PC-3 (cell line): ENCODE measurements at regions of chr12 and their contacts with region 1.

Region 1: GRCh38 chr12:25769076-25769945 is 189.2 kb upstream of the RASSF8 start:
- DNase-seq: peak; percentile 92
- ATAC-seq: peak; percentile 98
- H3K4me3 ChIP-seq: no peak overlapping the region
- H3K27ac ChIP-seq: peak overlapping the region; percentile 40
- H3K4me1 ChIP-seq: peaks cover 28% of the 10 kb centered on the region
- H3K27me3 ChIP-seq: no peaks in the 10 kb centered on the region
- CTCF ChIP-seq: no peak

Region 2: DNA sequence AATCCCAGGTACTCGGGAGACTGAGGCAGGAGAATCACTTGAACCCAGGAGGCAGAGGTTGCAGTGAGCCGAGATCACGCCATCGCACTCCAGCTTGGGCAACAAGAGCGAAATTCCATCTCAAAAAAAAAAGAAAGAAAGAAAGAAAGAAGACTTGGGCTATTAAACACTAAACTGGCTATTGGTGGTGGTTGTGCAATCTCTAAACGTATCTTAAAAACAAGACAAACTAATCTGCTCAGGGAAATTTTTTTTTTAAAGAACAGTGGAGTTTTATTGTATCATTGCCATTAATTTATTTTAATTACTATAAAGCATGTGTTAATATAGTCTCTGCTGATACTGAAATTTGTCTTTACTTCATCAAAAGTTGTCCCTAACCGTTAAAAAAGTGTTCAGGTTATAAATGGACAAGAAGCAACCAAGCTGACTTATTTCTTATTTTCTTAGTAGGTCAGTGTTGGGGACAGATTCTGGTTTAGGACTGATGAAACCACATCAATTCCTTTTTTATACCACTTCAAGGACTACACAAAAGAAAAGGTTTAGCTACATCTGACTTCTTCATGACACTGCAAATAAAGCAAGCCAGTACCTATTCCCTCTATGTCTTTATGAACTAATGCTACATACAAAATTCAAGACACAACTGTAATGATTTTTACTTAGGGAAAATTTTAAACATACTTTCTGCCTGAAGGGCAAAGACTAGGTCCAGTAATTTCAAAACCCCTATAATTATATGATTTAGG is 449.9 kb before region 1 on chr12:
- CTCF ChIA-PET with region 1: no interaction called
- POLR2A ChIA-PET with region 1: no interaction called
- intact Hi-C with region 1: no loop called
- DNase-seq: no peak
- ATAC-seq: no peak
- H3K4me3 ChIP-seq: no peak overlapping the region
- H3K27ac ChIP-seq: no peak overlapping the region
- H3K4me1 ChIP-seq: no peaks in the 10 kb centered on the region
- H3K27me3 ChIP-seq: peaks cover 41% of the 10 kb centered on the region
- CTCF ChIP-seq: no peak

Region 3: GRCh38 chr12:25689996-25690501 is 79.3 kb before region 1 on chr12:
- CTCF ChIA-PET with region 1: no interaction called
- POLR2A ChIA-PET with region 1: no interaction called
- intact Hi-C with region 1: loop called (anchors 5 kb)
- DNase-seq: no peak
- ATAC-seq: no peak
- H3K4me3 ChIP-seq: no peak overlapping the region
- H3K27ac ChIP-seq: no peak overlapping the region
- H3K4me1 ChIP-seq: peaks cover 14% of the 10 kb centered on the region; the same call in 1 of the 2 replicates
- H3K27me3 ChIP-seq: no peaks in the 10 kb centered on the region
- CTCF ChIP-seq: no peak